A549 (cell line): ENCODE measurements at regions of chr16 and their contacts with region 1.

Region 1: GRCh38 chr16:22141746-22142145 is 20.6 kb upstream of the SDR42E2 start:
- DNase-seq: peak; percentile 54 to 55
- ATAC-seq: peak; percentile 81 to 92
- H3K4me3 ChIP-seq: no peak overlapping the region
- H3K27ac ChIP-seq: no peak overlapping the region
- H3K4me1 ChIP-seq: no peaks in the 10 kb centered on the region
- CTCF ChIP-seq: peak; percentile 35; the same call in 2 of the 3 replicates
- EP300 ChIP-seq: no peak
- POLR2A ChIP-seq: no peak
- RAD21 ChIP-seq: 0 out of 5 replicates have a peak, but pooled peaks of 1 of the 2 experiments have one; percentile 11

Region 2: DNA sequence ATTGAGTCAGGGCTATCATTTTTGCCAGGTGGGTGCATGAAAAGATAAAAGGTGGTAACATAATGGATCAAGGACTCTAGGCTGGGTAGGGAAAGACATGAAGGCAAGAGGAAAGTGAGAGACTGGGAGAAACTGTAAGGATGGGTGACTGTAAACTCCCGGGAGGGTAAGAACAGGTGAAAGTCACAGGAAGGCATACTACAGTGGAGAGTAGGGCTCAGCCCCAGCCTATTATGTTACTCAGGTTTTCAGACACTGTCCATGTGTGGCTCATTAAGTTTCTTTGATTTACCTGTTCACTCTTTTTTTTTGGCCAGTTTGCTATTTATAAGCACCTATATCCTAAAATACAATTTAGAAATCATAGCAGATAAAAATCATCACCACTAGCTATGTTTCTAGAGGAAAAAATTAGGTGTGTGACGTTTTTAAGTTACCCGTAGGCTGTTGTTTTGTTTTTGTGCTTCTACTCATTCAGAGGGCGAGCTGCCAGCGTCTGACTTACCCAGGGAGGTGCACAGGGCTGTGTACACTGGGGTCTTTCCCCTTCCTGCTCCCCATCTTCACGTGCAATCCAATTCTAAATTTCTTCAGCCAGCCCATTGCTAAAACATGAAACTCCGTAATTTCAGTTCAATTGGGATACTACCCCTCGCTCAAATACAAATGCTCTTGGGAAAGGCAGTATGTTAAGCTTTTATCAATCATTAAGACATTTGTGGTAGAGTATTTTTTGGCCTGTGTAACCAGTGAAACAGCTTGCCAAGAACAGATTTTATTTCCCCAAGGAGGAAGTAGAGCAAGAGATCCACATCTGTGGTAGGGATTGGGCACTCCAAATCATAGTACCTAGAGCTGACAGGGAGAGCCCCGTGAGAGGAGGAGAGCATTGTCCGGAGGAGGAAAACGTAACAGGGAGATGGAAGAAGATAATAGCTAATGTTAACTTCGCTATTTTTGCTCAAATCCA is 71.1 kb before region 1 on chr16:
- CTCF ChIA-PET with region 1: no interaction called
- POLR2A ChIA-PET with region 1: no interaction called
- DNase-seq: no peak
- ATAC-seq: no peak
- H3K4me3 ChIP-seq: no peak overlapping the region
- H3K27ac ChIP-seq: no peak overlapping the region
- H3K4me1 ChIP-seq: no peaks in the 10 kb centered on the region
- CTCF ChIP-seq: no peak
- EP300 ChIP-seq: no peak
- POLR2A ChIP-seq: no peak
- RAD21 ChIP-seq: no peak

Region 3: DNA sequence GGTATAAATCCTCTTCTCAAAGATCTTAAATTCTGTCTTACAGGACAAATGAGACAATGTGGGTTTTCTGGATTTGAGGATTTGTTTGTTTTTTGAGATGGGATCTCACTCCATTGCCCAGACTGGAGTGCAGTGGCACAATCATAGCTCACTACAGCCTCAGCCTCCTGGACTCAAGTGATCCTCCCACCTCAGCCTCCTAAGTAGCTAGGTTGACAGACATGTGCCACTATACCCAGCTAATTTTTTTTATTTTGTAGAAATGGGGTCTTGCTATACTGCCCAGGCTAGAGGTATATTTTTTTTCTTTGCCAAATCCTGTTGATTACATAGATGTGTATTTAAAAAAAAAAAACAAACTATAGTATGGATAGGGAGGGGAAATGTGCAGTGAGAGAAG is 11.2 kb before region 1 on chr16:
- CTCF ChIA-PET with region 1: interaction called, 10 read pairs
- POLR2A ChIA-PET with region 1: interaction called, 5 read pairs
- DNase-seq: no peak
- ATAC-seq: no peak
- H3K4me3 ChIP-seq: no peak overlapping the region
- H3K27ac ChIP-seq: no peak overlapping the region
- H3K4me1 ChIP-seq: no peaks in the 10 kb centered on the region
- CTCF ChIP-seq: no peak
- EP300 ChIP-seq: no peak
- POLR2A ChIP-seq: no peak
- RAD21 ChIP-seq: no peak